RWPE1 (cell line): ENCODE measurements at regions of chr2 and their contacts with region 1.

Region 1: GRCh38 chr2:64488050-64488974 is 34.4 kb downstream of the LGALSL start:
- DNase-seq: peak; percentile 69
- H3K27ac ChIP-seq: no peak overlapping the region
- CTCF ChIP-seq: peak; percentile 86

Region 2: DNA sequence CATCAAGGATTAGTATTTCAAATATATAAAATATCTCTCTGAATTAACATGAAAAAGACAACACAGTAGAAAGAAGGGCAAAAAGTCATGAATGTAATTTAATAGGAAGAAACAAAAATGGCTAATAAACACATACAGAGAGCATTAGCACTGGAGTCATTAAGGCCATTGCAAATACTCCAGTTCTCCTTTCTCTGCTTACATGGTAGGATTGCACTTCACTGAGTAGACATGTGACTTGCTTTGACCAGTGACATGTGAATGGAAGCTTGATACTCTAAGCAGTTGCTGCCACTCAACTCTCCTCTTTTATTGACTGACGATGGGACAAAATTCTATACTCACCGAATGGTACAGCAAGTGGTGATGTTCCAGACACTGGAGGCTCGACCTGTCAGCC is 188.2 kb before region 1 on chr2:
- CTCF ChIA-PET with region 1: no interaction called
- POLR2A ChIA-PET with region 1: no interaction called
- DNase-seq: no peak
- H3K27ac ChIP-seq: no peak overlapping the region
- CTCF ChIP-seq: no peak

Region 3: DNA sequence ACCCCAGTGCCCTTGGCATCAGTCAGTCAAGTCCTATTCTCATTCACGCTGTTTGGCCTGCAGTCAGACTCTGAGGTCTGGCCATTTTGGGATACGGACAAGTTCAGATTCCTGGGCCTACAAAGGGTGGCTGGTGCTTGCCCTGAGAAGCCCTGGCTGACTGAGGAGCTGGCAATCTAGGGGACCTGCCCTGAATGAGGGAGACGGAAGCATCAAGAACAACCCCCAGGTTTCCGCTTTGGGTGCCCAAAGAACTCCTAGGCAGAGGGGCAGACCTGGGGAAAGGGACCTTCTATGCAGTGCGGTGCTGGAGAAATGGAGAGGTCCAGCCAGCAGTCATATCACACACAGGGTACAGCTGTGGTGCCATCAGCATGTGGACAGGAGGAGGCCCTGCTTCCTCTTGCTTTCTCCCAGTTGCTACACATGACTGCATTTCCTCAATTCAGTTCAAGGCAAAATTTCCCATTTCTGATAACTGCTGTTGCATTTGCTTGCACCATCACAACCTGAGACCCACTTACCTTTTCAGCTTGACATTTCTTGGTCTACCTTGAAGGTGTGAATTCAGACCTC is 105.2 kb before region 1 on chr2:
- CTCF ChIA-PET with region 1: no interaction called
- POLR2A ChIA-PET with region 1: no interaction called
- DNase-seq: no peak
- H3K27ac ChIP-seq: no peak overlapping the region
- CTCF ChIP-seq: no peak

Region 4: DNA sequence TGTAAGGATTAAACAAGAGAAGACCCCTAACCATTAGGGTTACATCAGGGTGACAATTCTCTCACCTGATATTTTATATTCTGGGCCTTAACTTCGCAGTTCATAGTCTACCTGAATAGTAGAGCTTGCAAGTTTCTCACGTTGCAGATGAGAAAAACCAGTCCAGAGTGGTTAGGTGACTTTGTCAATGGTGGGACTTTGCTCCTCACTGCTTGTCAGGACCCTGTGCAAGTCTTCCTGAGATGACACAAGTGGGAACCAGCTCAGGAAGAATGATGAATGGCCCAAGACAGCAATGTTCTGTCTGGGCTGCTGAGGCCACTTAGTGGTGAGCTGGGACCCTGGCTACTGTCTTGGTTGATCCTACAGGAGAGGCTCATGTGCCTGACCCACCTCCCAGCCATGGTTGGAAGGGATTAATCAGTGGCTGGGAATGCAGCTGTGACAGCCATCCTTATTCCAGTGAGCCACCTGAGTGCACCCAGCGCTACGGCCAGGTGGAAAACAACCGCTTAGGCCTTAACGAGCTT is 17.5 kb before region 1 on chr2:
- CTCF ChIA-PET with region 1: interaction called, 10 read pairs
- POLR2A ChIA-PET with region 1: no interaction called
- DNase-seq: no peak
- H3K27ac ChIP-seq: no peak overlapping the region
- CTCF ChIP-seq: no peak

Region 5: GRCh38 chr2:64498438-64498837 is 10.1 kb after region 1 on chr2:
- CTCF ChIA-PET with region 1: interaction called, 12 read pairs
- POLR2A ChIA-PET with region 1: no interaction called
- DNase-seq: no peak
- H3K27ac ChIP-seq: no peak overlapping the region
- CTCF ChIP-seq: no peak

Region 6: DNA sequence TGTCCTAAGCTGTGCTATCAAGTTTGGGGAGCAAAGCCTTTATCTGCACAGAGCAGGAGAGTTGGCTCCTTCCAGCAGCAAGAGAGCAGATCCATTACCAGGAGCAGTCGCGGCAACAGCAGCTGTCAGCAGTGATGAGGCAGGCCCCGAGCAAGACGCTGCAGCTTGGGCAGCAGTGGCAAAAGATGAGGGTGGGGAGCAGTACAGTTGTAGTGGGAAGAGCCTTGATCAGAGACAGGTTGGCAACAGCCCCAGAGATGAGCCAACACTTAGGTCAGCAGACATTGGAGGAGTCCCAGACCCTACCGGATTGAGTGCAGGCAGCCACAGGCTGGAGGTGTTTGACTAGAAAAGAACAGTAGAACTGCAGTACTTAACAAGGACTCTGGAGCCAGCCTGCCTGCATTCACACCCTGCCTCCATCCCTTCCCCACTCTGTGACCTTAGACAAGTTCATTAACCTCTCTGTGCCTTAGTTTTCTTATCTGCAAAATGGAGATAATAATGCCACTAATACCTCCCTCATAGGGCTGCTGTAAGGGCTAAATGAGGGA is 282.5 kb after region 1 on chr2:
- CTCF ChIA-PET with region 1: no interaction called
- POLR2A ChIA-PET with region 1: no interaction called
- DNase-seq: peak; percentile 72
- H3K27ac ChIP-seq: peak overlapping the region; percentile 78
- CTCF ChIP-seq: no peak; the same call in 1 of the 2 replicates